Activated CD4-positive, alpha-beta T cell treated with anti-CD3 and anti-CD28 coated beads for 36 hours (primary cell): ENCODE measurements at regions of chr6 and their contacts with region 1.

Region 1: DNA sequence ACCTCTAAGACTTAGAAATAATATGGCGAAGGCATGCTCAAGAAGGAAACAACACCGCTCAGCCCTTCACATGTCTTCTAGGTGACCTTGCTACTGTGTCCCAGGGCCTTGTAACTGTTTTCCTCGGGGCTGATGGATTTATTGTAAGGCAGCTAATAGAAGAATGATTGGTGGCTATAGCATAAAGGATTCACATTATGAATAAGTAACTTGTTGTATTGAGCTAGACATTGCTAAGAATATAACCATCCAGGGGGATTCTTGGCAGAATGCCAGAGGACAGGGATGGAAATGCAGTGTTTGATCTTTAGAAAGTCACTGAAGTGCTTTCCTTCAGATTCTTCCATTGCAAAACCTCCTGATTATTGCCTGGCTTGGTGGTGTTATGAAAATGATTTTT is 54.9 kb downstream of the PLEKHG1 start:
- DNase-seq: no peak
- ATAC-seq: no peak
- H3K4me3 Mint-ChIP-seq: no peak overlapping the region
- H3K27ac Mint-ChIP-seq: no peak overlapping the region
- H3K4me1 Mint-ChIP-seq: peaks cover 2% of the 10 kb centered on the region
- H3K27me3 Mint-ChIP-seq: no peaks in the 10 kb centered on the region

Region 2: GRCh38 chr6:149884215-149884614 is 770.4 kb before region 1 on chr6:
- CTCF ChIA-PET with region 1: no interaction called
- POLR2A ChIA-PET with region 1: no interaction called
- intact Hi-C with region 1: no loop called
- DNase-seq: no peak
- ATAC-seq: no peak
- H3K4me3 Mint-ChIP-seq: no peak overlapping the region
- H3K27ac Mint-ChIP-seq: no peak overlapping the region
- H3K4me1 Mint-ChIP-seq: no peaks in the 10 kb centered on the region
- H3K27me3 Mint-ChIP-seq: peaks cover 9% of the 10 kb centered on the region

Region 3: GRCh38 chr6:150775415-150776203 is 121.0 kb after region 1 on chr6:
- CTCF ChIA-PET with region 1: no interaction called
- POLR2A ChIA-PET with region 1: interaction called, 11 read pairs
- intact Hi-C with region 1: no loop called
- DNase-seq: no peak
- ATAC-seq: no peak
- H3K4me3 Mint-ChIP-seq: no peak overlapping the region
- H3K27ac Mint-ChIP-seq: no peak overlapping the region
- H3K4me1 Mint-ChIP-seq: peaks cover 9% of the 10 kb centered on the region
- H3K27me3 Mint-ChIP-seq: no peaks in the 10 kb centered on the region